ENCODE measurements at regions of chr6 and their contacts with region 1.

Region 1: DNA sequence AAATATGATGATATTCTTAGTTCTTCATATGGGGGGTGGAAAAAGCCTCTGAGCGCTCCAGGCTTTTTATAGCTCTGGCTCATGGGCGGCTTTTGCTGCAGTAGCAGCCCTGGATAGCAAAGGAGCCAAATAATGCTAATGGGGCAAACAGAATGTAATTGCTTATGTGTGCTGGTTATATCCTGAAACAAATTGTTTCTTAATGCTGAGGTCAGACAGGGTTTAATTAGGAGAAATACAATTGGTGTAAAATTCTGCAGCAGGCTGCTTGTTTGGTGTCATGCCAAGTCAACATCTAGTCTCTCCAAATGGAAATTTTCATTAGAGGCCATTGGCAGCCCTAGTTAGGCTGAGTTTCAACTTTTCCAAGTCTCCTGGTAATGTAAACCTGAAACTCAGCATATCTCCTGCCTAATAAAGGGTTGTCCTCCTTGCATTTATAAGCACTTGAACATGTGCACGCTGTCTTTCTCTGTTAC is 530.1 kb upstream of the NOX3 start:
- H3K4me3 ChIP-seq: no peak overlapping the region
- H3K27ac ChIP-seq: no peak overlapping the region
- H3K4me1 ChIP-seq: no peaks in the 10 kb centered on the region
- CTCF ChIP-seq: no peak

Region 2: DNA sequence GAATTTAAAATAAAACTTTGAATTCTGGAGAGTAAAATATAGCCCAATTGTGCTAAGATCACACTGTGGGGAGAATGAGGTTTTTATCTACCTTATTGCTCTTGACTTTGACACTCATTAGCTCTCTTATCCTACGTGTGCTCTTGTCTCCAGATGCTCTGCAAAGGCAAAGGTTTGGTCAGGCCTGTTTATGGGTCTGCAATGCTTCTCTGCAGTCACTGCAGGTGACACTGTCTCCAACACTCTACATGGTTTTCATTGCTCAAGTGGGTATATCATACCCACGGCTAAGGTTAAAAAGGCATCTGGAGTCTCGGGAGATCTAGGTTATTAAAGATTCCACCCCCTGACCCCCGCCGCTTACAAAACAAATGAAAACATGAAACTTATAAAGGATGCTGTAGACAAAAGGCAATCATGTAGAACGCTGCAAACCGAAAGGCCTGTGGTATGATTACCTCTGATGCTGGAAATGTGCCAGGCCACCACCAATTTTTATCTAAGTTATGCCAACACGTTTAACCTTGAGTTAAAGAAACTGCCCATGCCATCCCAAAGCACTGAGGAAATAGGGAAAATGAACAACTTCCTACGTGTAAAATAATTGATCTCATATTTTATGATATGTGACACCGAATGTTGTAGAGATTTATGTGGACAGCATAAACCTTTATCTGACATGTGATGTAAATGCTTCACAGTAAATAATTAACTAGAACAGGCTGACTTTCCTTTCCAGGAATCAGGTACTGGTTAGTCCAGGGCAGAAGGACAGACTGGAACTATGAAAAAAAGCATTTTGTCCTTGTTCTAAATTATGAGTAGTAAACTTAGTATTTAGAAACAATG is 291.9 kb before region 1 on chr6:
- CTCF ChIA-PET with region 1: no interaction called
- POLR2A ChIA-PET with region 1: interaction called, 10 read pairs
- H3K4me3 ChIP-seq: no peak overlapping the region
- H3K27ac ChIP-seq: no peak overlapping the region
- H3K4me1 ChIP-seq: no peaks in the 10 kb centered on the region
- CTCF ChIP-seq: no peak